Dendritic cell treated with granulocyte-macrophage colony-stimulating factor and Interleukin-4, amounts not matched to agents 40 ng/mL and 50 ng/mL, for 4 days (primary cell): ENCODE measurements at regions of chr3 and their contacts with region 1.

Region 1: DNA sequence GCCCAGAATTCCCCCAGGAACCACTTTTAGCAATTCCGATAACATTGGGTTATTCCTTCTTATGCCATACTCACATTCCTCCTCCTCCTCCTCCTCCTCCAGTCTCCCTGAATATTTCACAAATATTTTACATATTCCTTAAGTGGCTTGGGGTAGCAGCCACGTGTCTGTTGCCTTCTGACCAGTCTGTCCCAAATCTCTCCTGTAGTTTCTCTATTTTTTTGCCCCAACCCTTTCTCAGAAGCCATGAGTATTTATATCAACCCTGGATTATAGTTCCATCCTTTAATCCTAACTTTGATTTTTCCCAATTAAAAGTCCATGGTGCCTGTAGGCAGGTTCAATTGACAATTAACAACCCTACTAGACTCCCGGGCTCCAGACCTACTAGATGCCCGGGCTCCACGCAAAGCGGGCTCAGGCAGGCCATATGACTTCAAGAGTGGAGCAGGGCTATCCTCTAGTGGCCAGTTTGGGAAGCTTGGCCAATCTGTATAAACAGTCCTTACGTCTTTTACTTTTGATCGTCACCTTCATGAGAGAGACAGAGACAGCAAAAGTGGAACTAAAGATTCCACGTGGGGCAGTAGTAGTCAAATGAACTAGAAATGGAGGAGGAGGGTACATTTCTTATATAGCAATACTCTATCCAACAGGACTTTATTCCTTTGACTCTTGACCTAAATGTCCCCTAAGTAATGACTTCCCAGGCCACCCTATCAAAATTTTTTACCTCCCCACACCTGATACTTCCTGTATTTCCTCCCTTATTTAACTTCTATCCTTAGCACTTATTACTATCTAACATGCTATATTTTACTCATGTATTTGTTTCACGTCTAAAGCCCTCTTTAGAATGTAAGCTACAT is 69.7 kb downstream of the USF3 start:
- H3K4me3 Mint-ChIP-seq: peak overlapping the region; percentile 74
- H3K27ac Mint-ChIP-seq: peak overlapping the region; percentile 81
- H3K4me1 Mint-ChIP-seq: peaks cover 33% of the 10 kb centered on the region
- H3K27me3 Mint-ChIP-seq: no peaks in the 10 kb centered on the region

Region 2: DNA sequence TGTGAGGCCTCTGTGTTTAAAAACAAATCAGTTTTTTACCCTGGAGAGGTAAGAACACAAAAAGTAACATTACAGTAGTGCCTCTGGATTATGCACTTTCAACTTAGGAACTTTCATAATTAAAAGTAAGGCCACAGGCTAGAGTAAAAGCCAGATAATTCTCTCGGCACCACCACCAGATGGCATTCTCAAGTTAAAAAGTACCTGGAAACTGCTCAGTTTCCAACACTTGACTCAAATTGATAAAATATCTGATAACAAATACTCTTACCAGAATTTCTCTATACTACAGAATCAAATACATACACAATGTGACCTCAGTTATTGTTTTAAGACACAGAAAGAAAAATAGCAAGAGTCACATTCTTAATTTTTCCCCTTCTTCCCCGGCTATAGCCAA is 131.7 kb before region 1 on chr3:
- intact Hi-C with region 1: loop called (anchors 1 kb)
- H3K4me3 Mint-ChIP-seq: no peak overlapping the region
- H3K27ac Mint-ChIP-seq: no peak overlapping the region
- H3K4me1 Mint-ChIP-seq: no peaks in the 10 kb centered on the region
- H3K27me3 Mint-ChIP-seq: no peaks in the 10 kb centered on the region

Region 3: GRCh38 chr3:113696658-113697499 is 70.1 kb after region 1 on chr3:
- intact Hi-C with region 1: loop called (anchors 10 kb)
- H3K4me3 Mint-ChIP-seq: no peak overlapping the region
- H3K27ac Mint-ChIP-seq: no peak overlapping the region
- H3K4me1 Mint-ChIP-seq: peaks cover 33% of the 10 kb centered on the region
- H3K27me3 Mint-ChIP-seq: peaks cover 8% of the 10 kb centered on the region